ENCODE measurements at regions of chr9 and their contacts with region 1.

Region 1: GRCh38 chr9:75027187-75028107 is 646 bp downstream of the CARNMT1 start:
- DNase-seq: no peak
- H3K4me3 Mint-ChIP-seq: peak overlapping the region; percentile 97
- H3K27ac Mint-ChIP-seq: peak overlapping the region; percentile 98
- H3K4me1 Mint-ChIP-seq: peaks cover 47% of the 10 kb centered on the region
- H3K27me3 Mint-ChIP-seq: peaks cover 2% of the 10 kb centered on the region

Region 2: DNA sequence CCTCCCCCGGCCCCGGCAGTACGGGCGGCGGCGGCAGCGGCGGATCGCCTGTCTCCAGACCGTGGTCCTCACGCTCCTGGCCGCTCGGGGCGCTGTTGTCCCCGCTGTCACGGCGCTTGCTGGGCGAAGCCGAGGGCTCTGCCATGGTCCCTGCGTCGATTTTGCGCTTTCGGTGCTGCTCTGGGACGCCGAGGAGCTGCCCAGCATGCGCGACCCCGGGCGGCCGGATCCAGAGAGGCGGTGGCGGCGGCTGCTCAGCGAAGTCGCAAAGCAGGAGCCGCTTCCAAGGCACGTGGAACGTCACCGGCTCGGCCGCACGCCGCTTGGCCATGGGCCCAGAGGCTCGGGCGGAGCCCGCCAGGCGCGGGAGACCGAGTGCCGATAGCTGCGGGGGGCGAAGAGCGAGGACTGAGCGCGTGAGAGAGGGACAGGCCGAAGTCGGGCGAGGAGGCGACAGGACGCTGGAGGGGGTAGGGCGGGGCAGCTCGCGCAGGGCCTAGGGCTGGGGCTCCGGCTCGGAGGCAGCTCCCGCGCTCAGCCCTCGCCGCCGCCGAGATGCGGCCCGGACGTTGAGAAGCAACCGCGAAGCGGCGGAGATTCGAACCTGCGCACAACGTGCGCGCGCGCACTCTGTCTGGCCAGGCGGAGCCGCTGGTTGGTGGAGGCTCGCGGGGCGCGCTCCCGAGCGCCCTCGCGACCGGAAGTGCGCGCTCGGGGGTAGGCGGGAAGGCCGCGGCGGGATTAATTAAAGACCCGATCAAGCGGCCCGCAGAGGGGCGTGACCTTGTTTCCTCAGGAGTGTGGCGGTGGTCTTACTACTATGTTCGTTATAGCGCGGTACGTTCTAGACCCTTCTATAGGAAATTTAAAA is 74.9 kb before region 1 on chr9 and contains the start of gene C9orf40:
- intact Hi-C with region 1: loop called (anchors 1 kb)
- DNase-seq: peak; percentile 86
- H3K4me3 Mint-ChIP-seq: peak within 1 kb of the TSS; percentile 98
- H3K27ac Mint-ChIP-seq: peak within 1 kb of the TSS; percentile 99
- H3K4me1 Mint-ChIP-seq: peaks cover 44% of the 10 kb centered on the region
- H3K27me3 Mint-ChIP-seq: no peaks in the 10 kb centered on the region
- total RNA-seq, gene C9orf40: 18.1 and 18.3 TPM in 2 replicates

Region 3: DNA sequence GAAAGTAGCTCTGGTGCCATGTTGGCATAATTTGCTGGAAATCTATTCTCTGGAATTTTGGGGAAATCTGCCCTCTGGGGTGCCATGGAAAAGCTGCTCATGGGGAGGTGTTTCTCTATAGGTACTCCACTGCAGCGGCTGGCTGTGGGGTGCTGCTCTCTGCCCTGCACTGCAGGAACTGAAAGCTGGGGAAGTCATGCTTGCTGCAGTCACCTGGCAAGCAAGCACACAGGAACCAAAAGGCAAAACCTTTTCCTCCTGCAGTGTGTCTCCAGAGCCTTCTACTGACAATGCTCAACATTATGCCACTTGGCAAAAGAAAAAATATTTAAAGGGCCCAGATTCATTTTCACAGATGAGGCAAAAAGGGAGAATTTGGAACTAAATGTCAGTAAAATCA is 26.4 kb after region 1 on chr9:
- intact Hi-C with region 1: no loop called
- DNase-seq: no peak
- H3K4me3 Mint-ChIP-seq: no peak overlapping the region
- H3K27ac Mint-ChIP-seq: no peak overlapping the region
- H3K4me1 Mint-ChIP-seq: no peaks in the 10 kb centered on the region
- H3K27me3 Mint-ChIP-seq: peaks cover 1% of the 10 kb centered on the region

Region 4: DNA sequence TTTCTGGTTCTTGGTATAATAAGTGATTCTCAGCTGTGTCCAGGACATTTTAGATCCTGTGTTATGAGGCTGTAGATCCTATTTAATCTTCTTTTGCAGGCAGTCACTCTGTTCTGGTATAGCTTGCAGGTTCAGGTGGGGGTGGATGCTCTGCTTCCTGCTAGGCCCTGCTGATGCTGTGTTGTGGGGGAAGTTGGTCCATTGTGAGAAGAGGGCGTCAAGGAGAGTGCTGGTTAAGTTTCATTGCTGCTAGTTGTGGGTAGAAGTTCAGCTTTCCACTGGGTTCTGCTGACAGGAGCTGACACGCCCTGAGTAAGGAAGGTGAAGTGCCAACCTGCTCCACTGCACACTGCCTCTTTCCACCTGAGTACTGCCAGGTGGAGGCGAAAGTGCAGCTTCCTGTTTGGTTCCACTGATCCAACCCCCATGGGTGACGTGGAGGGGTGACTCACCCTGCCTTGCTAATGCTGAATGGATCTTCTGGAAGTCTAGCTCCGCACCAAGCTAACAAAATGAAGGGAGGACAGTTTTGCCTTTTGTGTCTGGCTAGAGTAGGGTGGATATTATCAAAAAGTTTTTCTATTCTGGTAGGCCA is 44.2 kb after region 1 on chr9:
- intact Hi-C with region 1: loop called (anchors 2 kb)
- DNase-seq: peak; percentile 26
- H3K4me3 Mint-ChIP-seq: no peak overlapping the region
- H3K27ac Mint-ChIP-seq: peak overlapping the region; percentile 79
- H3K4me1 Mint-ChIP-seq: peaks cover 35% of the 10 kb centered on the region
- H3K27me3 Mint-ChIP-seq: no peaks in the 10 kb centered on the region

Region 5: DNA sequence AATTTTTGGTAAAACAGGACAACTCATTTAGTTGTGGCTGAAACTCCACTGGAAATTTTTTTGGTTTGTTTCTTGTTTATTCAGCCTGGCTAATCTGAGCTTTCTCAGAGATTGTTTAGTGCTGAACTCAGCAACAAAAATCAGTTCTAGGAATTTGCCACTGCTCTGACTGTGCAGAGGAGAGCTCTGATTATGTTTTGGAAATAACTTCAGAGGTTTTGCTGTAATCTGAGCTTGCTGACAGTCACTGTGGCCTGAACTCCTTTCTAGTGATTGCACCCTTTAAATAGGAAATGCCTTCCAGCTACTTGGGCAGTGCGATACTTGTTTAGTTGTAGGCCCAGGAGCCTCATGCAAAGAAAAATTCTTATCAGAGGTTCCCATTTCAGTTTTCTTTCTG is 121.1 kb after region 1 on chr9:
- intact Hi-C with region 1: loop called (anchors 2 kb)
- DNase-seq: peak; percentile 37
- H3K4me3 Mint-ChIP-seq: peak overlapping the region; percentile 62
- H3K27ac Mint-ChIP-seq: peak overlapping the region; percentile 87
- H3K4me1 Mint-ChIP-seq: peaks cover 79% of the 10 kb centered on the region
- H3K27me3 Mint-ChIP-seq: no peaks in the 10 kb centered on the region

Region 6: DNA sequence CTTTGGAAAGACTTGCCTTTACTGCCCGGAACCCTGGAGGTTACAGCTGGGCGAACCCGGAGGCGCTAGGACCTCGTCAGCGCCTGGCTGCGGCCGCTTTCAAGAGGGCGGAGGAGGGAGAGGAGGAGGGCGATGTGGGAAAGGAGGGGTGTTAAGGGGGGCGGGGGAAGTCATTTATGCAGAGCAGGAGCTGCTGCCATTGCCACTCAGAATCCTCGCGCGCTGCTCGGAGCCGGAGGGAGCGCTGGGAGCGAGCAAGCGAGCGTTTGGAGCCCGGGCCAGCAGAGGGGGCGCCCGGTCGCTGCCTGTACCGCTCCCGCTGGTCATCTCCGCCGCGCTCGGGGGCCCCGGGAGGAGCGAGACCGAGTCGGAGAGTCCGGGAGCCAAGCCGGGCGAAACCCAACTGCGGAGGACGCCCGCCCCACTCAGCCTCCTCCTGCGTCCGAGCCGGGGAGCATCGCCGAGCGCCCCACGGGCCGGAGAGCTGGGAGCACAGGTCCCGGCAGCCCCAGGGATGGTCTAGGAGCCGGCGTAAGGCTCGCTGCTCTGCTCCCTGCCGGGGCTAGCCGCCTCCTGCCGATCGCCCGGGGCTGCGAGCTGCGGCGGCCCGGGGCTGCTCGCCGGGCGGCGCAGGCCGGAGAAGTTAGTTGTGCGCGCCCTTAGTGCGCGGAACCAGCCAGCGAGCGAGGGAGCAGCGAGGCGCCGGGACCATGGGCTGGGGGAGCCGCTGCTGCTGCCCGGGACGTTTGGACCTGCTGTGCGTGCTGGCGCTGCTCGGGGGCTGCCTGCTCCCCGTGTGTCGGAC is 863.2 kb after region 1 on chr9 and contains the start of gene PCSK5:
- intact Hi-C with region 1: loop called (anchors 1 kb)
- DNase-seq: peak; percentile 81
- H3K4me3 Mint-ChIP-seq: peak within 1 kb of the TSS; percentile 91
- H3K27ac Mint-ChIP-seq: peak within 1 kb of the TSS; percentile 76
- H3K4me1 Mint-ChIP-seq: peaks cover 35% of the 10 kb centered on the region
- H3K27me3 Mint-ChIP-seq: peaks cover 37% of the 10 kb centered on the region
- total RNA-seq, gene PCSK5: 3.3 and 3.7 TPM in 2 replicates